Activated CD8-positive, alpha-beta T cell treated with anti-CD3 and anti-CD28 coated beads, Interleukin-2, amount 10 ng/mL, durations not matched to agents 7 days and 5 days (primary cell): ENCODE measurements at regions of chr2 and their contacts with region 1.

Region 1: DNA sequence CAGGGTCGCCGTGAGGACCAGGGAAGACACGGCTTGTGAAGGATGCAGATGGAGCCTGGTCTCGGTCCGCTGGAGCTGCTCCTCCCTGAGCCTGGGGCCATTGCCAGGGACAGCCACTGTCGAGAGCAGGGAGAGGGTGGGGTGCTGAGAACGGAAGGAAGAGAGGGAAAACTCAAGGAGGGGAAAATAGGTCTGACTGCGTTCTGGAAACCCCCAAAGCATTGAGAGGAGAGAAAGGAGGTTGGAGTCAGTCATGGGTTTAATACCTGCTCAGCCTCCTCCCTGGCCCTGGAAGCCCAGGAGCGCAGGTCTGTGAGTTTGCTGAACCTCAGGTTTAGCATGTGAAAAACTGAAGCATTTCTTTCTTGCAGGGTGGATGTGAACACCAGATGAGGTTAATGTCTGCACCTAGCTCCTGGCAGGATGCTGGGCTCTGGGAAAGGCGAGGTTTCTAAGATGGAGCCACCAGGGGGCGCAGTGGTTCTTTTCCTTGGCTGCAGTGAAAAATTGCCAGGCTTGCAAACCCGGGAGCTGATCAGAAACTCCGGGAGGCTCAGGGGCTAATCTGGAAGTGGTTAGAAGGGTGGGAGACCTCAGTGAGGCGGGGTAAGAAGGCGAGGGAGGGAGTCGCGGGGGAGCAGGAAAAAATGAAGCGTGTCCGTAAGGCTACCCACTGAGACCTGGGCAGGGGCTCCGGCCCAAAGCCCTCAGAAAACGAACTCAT is 33.6 kb upstream of the RNF149 start:
- DNase-seq: peak; percentile 75
- ATAC-seq: peak; percentile 62
- H3K4me3 Mint-ChIP-seq: no peak overlapping the region
- H3K27ac Mint-ChIP-seq: peak overlapping the region; percentile 74
- H3K4me1 Mint-ChIP-seq: peaks cover 48% of the 10 kb centered on the region
- H3K27me3 Mint-ChIP-seq: peaks cover 4% of the 10 kb centered on the region

Region 2: DNA sequence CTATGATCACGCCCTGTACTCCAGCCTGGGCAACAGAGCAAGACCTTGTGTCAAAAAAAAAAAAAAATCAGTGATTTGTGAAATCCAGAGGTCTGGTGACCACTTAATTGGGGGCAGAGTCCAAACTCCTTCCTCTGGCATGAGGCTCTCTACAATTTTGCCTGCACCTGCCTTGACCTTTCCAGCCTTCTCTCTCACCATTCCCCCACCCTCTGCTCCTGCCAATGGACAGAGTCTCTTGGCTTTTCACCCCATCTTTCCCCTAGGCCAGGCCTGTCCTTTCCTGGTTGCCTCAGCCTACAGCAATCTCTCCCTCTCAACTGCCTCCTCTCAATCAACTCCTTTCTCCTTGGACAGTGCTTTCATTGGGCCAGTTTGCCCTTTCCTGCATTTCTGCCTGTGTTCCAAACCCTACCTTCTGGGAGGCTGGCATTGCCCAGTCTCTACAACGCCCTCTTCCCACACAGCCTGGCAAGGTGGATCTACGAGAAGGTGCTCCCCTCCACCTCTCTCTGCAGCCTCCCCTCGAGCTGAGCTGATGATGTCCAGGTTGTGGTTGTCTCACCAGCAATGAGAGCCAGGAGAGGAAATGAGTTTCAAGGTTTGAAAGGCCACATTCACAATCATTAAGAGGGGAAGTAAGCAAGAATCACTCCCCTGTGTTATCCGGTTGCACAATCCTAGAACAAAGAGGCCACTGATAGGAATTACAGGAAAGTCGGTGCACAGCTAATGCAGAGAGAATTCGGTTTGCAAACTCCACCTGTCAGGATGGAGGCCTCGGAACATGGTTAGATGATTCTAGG is 561.7 kb before region 1 on chr2:
- CTCF ChIA-PET with region 1: no interaction called
- POLR2A ChIA-PET with region 1: no interaction called
- DNase-seq: no peak
- ATAC-seq: no peak
- H3K4me3 Mint-ChIP-seq: no peak overlapping the region
- H3K27ac Mint-ChIP-seq: no peak overlapping the region
- H3K4me1 Mint-ChIP-seq: no peaks in the 10 kb centered on the region
- H3K27me3 Mint-ChIP-seq: no peaks in the 10 kb centered on the region

Region 3: GRCh38 chr2:101047075-101047766 is 294.8 kb before region 1 on chr2:
- CTCF ChIA-PET with region 1: no interaction called
- POLR2A ChIA-PET with region 1: no interaction called
- DNase-seq: no peak
- ATAC-seq: no peak
- H3K4me3 Mint-ChIP-seq: no peak overlapping the region
- H3K27ac Mint-ChIP-seq: no peak overlapping the region
- H3K4me1 Mint-ChIP-seq: no peaks in the 10 kb centered on the region
- H3K27me3 Mint-ChIP-seq: peaks cover 3% of the 10 kb centered on the region

Region 4: DNA sequence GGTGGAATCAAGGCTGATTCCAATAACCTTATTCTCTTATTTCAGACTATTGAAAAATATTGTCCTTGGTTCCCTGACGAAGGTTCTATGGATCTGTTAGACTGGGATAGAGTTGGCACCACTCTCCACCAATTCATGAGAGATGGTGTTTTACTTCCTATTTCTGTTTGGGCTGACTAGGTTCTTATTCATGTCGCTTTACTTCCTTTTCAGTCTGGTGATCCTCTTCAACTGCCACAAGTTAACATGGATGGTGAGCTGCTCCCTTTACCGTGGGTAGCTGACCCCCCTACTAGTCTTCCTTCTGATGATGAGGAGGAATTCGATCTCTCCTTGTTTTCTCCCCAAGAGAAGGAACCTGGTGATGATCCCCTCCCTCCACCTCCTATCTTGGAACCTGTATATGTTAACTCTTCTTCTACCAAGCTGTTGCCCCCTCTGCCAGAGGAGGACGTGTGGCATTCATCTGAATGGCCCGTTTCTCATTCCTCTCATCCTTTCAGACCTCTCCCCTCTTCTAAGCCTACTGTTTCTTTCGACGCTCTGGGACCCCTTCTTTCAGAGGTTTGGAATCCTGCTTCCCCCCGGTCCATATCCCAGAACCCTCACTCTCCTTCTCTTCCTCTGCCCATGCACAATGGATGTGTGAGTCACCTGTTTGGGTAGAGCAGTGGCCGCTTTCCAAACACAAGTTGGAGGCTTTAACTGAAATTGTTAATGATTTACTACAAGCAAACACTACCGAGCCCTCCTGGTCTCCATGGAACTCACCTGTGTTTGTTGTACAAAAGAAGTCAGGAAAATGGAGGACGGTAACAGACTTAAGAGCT is 102.9 kb before region 1 on chr2:
- CTCF ChIA-PET with region 1: interaction called, 15 read pairs
- POLR2A ChIA-PET with region 1: no interaction called
- DNase-seq: no peak
- ATAC-seq: no peak
- H3K4me3 Mint-ChIP-seq: no peak overlapping the region
- H3K27ac Mint-ChIP-seq: no peak overlapping the region
- H3K4me1 Mint-ChIP-seq: peaks cover 4% of the 10 kb centered on the region
- H3K27me3 Mint-ChIP-seq: peaks cover 4% of the 10 kb centered on the region

Region 5: DNA sequence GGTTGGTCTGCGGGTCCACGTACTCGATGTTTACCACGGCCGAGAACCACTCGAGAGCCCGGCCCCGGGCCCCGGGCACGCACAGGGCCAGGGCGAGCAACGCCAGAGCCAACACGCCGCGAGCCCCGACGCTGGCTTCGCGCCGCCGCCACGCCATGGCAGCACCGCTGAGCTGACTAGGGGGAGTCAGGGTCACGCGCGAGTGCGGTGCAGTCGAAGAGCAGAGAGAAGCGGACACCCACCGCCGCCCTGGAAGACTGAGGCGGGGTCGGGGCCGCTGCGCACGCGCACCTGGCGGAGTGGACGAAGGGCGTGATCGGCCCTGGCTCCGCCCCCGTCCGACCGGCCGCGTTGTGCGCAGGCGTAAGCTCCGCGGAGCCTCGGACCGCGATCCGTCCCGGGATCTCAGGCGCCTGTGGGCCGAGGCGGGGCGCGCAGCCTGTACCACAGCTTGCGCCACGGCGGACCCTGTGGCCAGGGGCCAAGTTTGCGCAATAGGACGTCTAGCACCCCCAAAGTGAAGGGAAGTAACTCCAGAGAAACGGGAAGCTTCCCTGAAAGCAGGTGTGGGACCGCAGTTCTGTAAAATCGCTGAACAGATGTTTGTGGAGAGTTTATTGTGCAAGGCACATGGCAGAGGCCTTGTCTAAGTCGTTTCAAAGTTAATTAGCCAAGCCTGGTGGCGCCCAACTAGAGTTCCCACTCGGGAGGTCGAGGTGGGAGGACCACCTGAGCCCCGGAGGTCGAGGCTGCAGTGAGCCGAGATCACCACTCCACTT is 33.4 kb before region 1 on chr2 and contains the start of gene RNF149:
- CTCF ChIA-PET with region 1: interaction called, 12 read pairs
- POLR2A ChIA-PET with region 1: interaction called, 5 read pairs
- DNase-seq: peak; percentile 92
- ATAC-seq: peak; percentile 73
- H3K4me3 Mint-ChIP-seq: peak within 1 kb of the TSS; percentile 93
- H3K27ac Mint-ChIP-seq: peak within 1 kb of the TSS; percentile 94
- H3K4me1 Mint-ChIP-seq: peaks cover 66% of the 10 kb centered on the region
- H3K27me3 Mint-ChIP-seq: no peaks in the 10 kb centered on the region
- total RNA-seq, gene RNF149: 64.2 to 71.5 TPM

Region 6: DNA sequence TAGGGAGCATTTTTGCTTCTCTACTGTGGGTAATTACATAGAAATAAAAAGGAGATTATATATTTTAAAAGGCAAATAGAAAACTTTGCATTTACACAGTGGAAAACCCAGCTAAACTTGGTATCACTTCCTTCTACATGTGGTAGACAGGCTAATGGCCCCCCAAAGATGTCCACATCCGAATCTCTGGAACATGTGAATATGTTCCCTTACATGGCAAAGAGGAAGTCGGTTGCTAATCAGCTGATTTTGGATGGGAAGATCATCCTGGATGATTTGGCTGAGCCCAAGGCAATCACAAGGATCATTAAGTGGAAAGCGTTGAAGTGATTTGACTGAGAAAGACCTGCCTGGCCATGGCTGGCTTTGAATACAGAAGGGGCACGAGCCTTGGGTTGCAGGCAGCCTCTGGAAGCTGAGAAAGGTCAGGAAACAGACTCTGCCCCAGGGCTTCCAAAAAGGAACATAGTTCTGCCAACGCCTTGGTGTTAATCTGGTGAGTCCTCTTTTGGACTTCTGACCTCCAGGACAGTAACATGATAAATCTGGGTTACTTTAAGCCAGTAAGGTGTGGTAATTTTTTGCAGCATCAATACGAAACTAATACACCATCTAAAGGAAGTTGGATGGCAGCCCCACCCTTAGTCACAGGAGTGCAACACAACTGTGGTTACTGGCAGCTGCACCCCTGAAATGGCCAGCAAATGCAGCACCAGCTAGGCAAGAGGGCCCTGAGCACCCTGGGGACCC is 19.2 kb after region 1 on chr2:
- CTCF ChIA-PET with region 1: interaction called, 53 read pairs
- POLR2A ChIA-PET with region 1: no interaction called
- DNase-seq: peak; percentile 55
- ATAC-seq: peak; percentile 76
- H3K4me3 Mint-ChIP-seq: no peak overlapping the region
- H3K27ac Mint-ChIP-seq: peak overlapping the region; percentile 81
- H3K4me1 Mint-ChIP-seq: peaks cover 27% of the 10 kb centered on the region
- H3K27me3 Mint-ChIP-seq: peaks cover 19% of the 10 kb centered on the region

Region 7: GRCh38 chr2:101405351-101405899 is 63.4 kb after region 1 on chr2:
- CTCF ChIA-PET with region 1: no interaction called
- POLR2A ChIA-PET with region 1: no interaction called
- DNase-seq: no peak
- ATAC-seq: no peak
- H3K4me3 Mint-ChIP-seq: no peak overlapping the region
- H3K27ac Mint-ChIP-seq: no peak overlapping the region
- H3K4me1 Mint-ChIP-seq: no peaks in the 10 kb centered on the region
- H3K27me3 Mint-ChIP-seq: peaks cover 2% of the 10 kb centered on the region

Region 8: DNA sequence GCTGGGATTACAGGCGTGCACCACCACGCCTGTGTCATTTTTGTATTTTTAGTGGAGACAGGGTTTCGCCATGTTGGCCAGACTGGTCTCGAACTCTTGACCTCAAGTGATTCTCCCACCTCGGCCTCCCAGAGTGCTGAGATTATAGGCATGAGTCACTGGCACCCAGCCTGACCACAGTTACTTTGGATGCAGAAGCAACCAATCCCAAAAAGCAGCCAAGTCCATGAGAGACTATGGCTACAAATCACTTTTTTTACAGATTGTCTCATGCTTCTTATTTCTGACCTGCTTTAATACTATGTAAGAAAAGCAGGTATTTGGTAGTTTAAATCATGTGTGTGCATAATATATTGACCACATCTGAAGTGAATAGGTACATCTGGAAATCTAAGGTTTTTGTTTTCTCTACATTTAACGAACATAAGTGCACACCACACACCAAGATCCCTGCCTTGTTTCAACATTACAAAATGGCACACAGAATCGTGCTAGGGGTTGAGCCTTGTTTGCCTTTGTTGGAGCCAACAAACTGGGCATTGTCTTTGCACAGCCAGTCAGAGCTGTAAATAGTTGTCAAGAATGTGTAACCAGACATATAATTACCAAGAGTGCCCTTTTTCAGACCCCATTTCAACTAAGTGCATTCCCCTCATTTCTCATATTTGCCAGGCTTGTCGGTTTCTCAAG is 337.1 kb after region 1 on chr2:
- CTCF ChIA-PET with region 1: no interaction called
- POLR2A ChIA-PET with region 1: no interaction called
- DNase-seq: no peak
- ATAC-seq: no peak
- H3K4me3 Mint-ChIP-seq: no peak overlapping the region
- H3K27ac Mint-ChIP-seq: no peak overlapping the region
- H3K4me1 Mint-ChIP-seq: no peaks in the 10 kb centered on the region
- H3K27me3 Mint-ChIP-seq: no peaks in the 10 kb centered on the region

Region 9: GRCh38 chr2:101823347-101823791 is 481.3 kb after region 1 on chr2:
- CTCF ChIA-PET with region 1: interaction called, 15 read pairs
- POLR2A ChIA-PET with region 1: no interaction called
- DNase-seq: peak; percentile 81
- ATAC-seq: peak; percentile 84
- H3K4me3 Mint-ChIP-seq: no peak overlapping the region
- H3K27ac Mint-ChIP-seq: no peak overlapping the region
- H3K4me1 Mint-ChIP-seq: peaks cover 57% of the 10 kb centered on the region
- H3K27me3 Mint-ChIP-seq: no peaks in the 10 kb centered on the region